Caki2 (cell line): ENCODE measurements at regions of chr14 and their contacts with region 1.

Region 1: DNA sequence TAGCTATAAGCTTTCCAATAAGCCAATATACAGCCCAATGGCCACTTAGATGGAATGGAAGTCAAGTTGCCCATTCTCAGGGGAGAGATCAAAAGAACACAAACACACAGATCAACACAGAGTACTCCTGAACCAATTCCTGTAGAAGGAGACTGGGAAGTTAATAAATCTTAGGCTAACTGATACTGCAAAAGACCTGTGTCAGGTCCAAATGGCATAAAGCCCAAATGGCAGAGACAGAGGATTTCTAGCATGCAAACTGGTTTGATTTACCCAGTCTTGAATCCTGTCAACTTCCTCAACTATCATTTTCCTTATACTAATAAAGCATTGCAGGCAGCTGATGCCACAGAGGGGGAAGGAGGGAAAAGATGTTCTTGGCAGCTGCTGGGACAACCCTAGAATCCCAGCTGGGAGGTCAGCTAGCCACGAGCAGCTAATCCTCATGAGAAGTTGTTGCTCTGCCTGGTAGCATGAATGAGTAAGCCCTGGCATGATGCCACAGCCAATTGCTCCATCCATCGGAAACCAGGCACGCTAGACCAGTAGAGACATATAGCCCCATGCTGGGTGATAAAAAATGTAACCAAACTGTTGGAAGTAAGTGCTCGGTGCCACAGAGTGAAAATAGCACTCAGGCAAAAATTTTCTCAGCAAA is 26.2 kb downstream of the ANG start:
- DNase-seq: peak; percentile 44

Region 2: GRCh38 chr14:20782280-20782890 is 67.7 kb after region 1 on chr14:
- in situ Hi-C with region 1: loop called (anchors 10 kb)
- DNase-seq: no peak